ENCODE measurements at regions of chr17 and their contacts with region 1.

Region 1: GRCh38 chr17:27293898-27294688 is at the start of gene WSB1:
- DNase-seq: peak; percentile 92 to 99
- H3K4me3 ChIP-seq: peak within 1 kb of the TSS; percentile 98
- CTCF ChIP-seq: no peak
- POLR2A ChIP-seq: peak in 1 of 2 donors; percentile 98
- total RNA-seq, gene WSB1: 33.1 to 105 (median 55.6) TPM

Region 2: DNA sequence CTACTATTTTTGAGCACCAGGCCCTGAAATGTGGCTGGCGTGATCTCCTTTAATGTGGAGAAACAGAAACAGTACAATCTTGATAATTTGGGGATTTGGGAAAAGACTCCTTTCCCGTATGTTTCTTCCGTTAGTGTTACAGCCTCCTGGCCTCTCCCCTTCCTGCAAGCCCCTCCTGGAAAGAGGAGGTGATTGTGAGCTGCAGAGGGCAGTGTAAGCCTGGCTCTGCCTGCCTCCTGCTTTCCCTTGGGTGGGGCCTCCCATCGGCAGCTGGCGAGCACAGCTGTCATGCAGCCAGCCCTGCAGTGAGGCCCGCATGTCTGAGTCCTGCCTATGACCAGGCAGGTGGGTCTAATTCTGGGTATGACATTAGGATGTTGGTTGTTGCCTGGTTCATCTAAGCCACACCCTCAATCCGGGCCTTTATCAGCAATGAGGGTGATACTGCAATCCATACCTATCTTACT is 48.8 kb before region 1 on chr17:
- intact Hi-C with region 1: loop called (anchors 10 kb)
- DNase-seq: peak; percentile 80 to 95
- H3K4me3 ChIP-seq: no peak overlapping the region
- CTCF ChIP-seq: peak in 1 of 3 donors; percentile 62
- POLR2A ChIP-seq: no peak

Region 3: DNA sequence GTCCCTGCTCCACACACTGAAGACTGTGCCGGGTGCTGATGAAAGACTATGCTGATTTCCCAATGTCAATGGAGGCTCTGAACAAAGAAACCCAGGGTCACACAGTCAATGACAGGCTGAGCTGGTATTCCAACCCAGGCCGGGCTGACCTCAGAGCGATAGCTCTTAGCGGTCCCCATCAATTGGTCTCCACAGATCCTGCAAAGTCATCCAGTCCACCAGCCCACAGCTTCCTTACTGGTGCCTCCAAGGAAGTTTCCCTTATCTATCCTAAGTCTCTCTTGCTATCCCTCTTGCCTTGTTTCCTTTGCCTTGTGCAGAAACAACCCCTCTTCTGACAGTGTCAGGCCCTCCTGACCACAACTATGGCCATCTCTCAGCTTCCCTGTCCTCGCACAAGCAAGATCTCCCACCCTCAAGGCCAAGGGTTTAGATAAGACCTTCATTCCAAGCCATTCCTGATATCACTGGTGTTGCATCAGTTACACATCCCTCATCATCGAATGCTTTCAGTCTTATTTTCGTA is 109.5 kb after region 1 on chr17:
- intact Hi-C with region 1: no loop called
- DNase-seq: peak in 1 of 2 donors; percentile 54
- H3K4me3 ChIP-seq: no peak overlapping the region
- CTCF ChIP-seq: no peak
- POLR2A ChIP-seq: no peak

Measured in lower leg skin (tissue), 4 donors.